ENCODE measurements at regions of chr3 and their contacts with region 1.

Region 1: DNA sequence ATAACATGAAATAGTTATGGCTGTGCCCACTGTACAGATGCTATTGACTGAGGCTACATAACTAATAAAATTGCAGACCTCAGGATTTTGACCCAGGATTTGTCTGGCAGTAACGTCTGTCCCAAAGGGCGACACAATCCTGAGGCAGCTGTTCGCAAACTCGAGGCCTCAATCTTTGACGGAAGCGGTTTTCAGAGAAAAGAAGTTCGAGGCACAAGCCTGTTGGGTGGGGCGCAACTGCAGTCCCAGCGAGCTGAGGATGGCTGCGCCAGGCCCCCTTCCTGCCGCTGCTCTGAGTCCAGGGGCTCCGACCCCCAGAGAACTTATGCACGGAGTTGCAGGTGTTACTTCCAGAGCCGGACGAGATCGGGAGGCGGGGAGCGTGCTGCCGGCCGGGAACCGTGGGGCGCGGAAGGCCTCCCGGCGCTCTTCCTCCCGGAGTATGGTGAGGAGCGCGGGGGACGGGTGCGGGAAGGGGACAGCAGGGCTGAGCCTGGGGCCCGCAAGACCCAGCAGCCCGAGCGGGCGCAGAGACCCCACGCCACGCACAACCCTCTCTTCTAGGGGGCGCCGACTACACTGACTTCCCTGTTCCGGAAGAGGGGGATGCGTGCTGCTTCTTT is at the start of gene PARP15:
- DNase-seq: peak; percentile 12 to 60 (median 46)
- H3K4me3 ChIP-seq: peak within 1 kb of the TSS; percentile 49
- H3K4me3 Mint-ChIP-seq: peak within 1 kb of the TSS; percentile 97 to 100 (median 100)
- H3K27ac ChIP-seq: peak within 1 kb of the TSS; percentile 52
- H3K27ac Mint-ChIP-seq: peak within 1 kb of the TSS; percentile 83 to 99 (median 99)
- H3K4me1 ChIP-seq: peaks cover 27% of the 10 kb centered on the region
- H3K4me1 Mint-ChIP-seq: peaks cover 53 to 79% (median 66%) of the 10 kb centered on the region in 3 donors
- H3K27me3 ChIP-seq: no peaks in the 10 kb centered on the region
- H3K27me3 Mint-ChIP-seq: no peaks in the 10 kb centered on the region
- total RNA-seq, gene PARP15: 12.7 to 13.9 TPM

Region 2: GRCh38 chr3:122564155-122564912 is 13.2 kb before region 1 on chr3 and contains the starts of genes DTX3L and PARP9:
- CTCF ChIA-PET with region 1: interaction called, 9 read pairs
- POLR2A ChIA-PET with region 1: interaction called, 21 read pairs
- DNase-seq: peak; percentile 73 to 86 (median 80)
- H3K4me3 ChIP-seq: peak within 1 kb of the TSS; percentile 86
- H3K4me3 Mint-ChIP-seq: peak within 1 kb of the TSS; percentile 91 to 96 (median 94)
- H3K27ac ChIP-seq: peak within 1 kb of the TSS; percentile 86
- H3K27ac Mint-ChIP-seq: peak within 1 kb of the TSS; percentile 88 to 99 (median 95)
- H3K4me1 ChIP-seq: peaks cover 65% of the 10 kb centered on the region
- H3K4me1 Mint-ChIP-seq: peaks cover 70 to 85% (median 83%) of the 10 kb centered on the region in 3 donors
- H3K27me3 ChIP-seq: no peaks in the 10 kb centered on the region
- H3K27me3 Mint-ChIP-seq: no peaks in the 10 kb centered on the region
- total RNA-seq, gene DTX3L: 22.9 to 24.3 TPM
- total RNA-seq, gene PARP9: 13.2 to 13.4 TPM

Measured in CD8-positive, alpha-beta memory T cell (primary cell).